ENCODE measurements at regions of chr14 and their contacts with region 1.

Region 1: GRCh38 chr14:20454516-20455354 is at the starts of genes APEX1 and OSGEP:
- DNase-seq: peak; percentile 93 to 95
- H3K4me3 ChIP-seq: peak within 1 kb of the TSS; percentile 86 to 95 (median 90)
- H3K27ac ChIP-seq: peak within 1 kb of the TSS; percentile 99
- H3K4me1 ChIP-seq: peaks cover 0 to 10% (median 1%) of the 10 kb centered on the region in 4 experiments; a peak in 4 of 7 replicates
- H3K27me3 ChIP-seq: no peaks in the 10 kb centered on the region
- CTCF ChIP-seq: no peak; a peak in 1 of 4 replicates
- EP300 ChIP-seq: no peak
- POLR2A ChIP-seq: peak; percentile 95 to 96
- RAD21 ChIP-seq: peak; percentile 5 to 13; a peak in 2 of 4 replicates
- total RNA-seq, gene APEX1: 384 and 404 TPM in 2 replicates
- total RNA-seq, gene OSGEP: 34.4 and 42.3 TPM in 2 replicates

Region 2: GRCh38 chr14:20343092-20343861 is 111.5 kb before region 1 on chr14 and contains the start of gene PARP2:
- CTCF ChIA-PET with region 1: no interaction called
- POLR2A ChIA-PET with region 1: interaction called, 69 read pairs
- DNase-seq: peak; percentile 98 to 100
- H3K4me3 ChIP-seq: peak within 1 kb of the TSS; percentile 86 to 97 (median 88)
- H3K27ac ChIP-seq: peak within 1 kb of the TSS; percentile 83
- H3K4me1 ChIP-seq: no peaks in the 10 kb centered on the region; a peak in 1 of 7 replicates
- H3K27me3 ChIP-seq: no peaks in the 10 kb centered on the region
- CTCF ChIP-seq: no peak
- EP300 ChIP-seq: no peak; a peak in 1 of 3 replicates
- POLR2A ChIP-seq: peak; percentile 97 to 100
- RAD21 ChIP-seq: 0 out of 4 replicates have a peak, but pooled peaks of 1 of the 2 experiments have one; percentile 0
- total RNA-seq, gene PARP2: 41.7 and 42.9 TPM in 2 replicates

Region 3: DNA sequence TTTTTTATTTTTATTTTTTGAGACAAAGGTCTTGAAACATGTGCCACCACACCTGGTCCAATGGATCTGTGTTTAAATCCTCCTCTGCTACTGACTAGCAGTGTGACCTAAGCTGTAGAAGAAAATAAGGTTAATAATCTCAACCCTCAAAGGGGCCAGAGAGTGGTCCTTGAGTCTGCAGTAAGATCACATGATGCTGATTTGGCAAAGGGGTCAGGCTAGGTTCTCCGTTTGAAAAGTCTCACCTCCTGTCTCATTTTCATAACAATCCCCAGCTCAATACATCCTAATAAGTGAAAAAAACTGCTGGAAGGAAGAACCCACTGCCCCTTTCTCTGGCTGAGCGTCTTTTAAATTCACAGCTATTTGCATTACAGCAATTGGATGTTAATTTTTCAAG is 33.5 kb before region 1 on chr14:
- CTCF ChIA-PET with region 1: interaction called, 6 read pairs
- POLR2A ChIA-PET with region 1: interaction called, 12 read pairs
- DNase-seq: no peak
- H3K4me3 ChIP-seq: peak overlapping the region in 1 of 4 experiments; percentile 10; a peak in 1 of 8 replicates
- H3K27ac ChIP-seq: no peak overlapping the region
- H3K4me1 ChIP-seq: peaks cover 0 to 5% (median 2%) of the 10 kb centered on the region in 4 experiments; a peak in 3 of 7 replicates
- H3K27me3 ChIP-seq: no peaks in the 10 kb centered on the region
- CTCF ChIP-seq: no peak
- EP300 ChIP-seq: no peak
- POLR2A ChIP-seq: no peak
- RAD21 ChIP-seq: no peak

Region 4: DNA sequence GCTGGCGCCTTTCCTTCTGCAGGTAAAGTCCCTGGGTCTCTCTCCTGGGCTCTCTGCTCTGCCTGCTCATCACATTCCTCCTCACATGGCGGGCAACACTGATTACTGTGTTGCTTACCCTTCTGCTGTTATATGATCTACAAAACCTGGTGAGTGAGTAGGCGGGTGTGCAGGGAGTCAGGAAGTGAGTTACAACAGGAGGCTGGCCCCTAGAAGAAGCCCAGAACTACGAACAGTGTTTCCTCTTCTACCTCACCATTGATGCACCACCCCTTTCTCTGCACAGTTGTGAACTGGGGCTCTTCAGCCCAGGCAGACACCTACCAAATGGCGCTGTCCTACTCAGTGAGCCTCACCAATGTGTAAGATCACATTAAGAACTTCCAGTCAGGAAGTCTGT is 13.9 kb before region 1 on chr14:
- CTCF ChIA-PET with region 1: no interaction called
- POLR2A ChIA-PET with region 1: interaction called, 68 read pairs
- DNase-seq: no peak
- H3K4me3 ChIP-seq: no peak overlapping the region
- H3K27ac ChIP-seq: no peak overlapping the region
- H3K4me1 ChIP-seq: peaks cover 0 to 3% (median 2%) of the 10 kb centered on the region in 4 experiments; a peak in 3 of 7 replicates
- H3K27me3 ChIP-seq: peaks cover 0 to 5% (median 2%) of the 10 kb centered on the region in 4 experiments; a peak in 4 of 7 replicates
- CTCF ChIP-seq: no peak
- EP300 ChIP-seq: no peak
- POLR2A ChIP-seq: no peak
- RAD21 ChIP-seq: no peak

Region 5: GRCh38 chr14:20489093-20489994 is 34.6 kb after region 1 on chr14:
- CTCF ChIA-PET with region 1: interaction called, 4 read pairs
- POLR2A ChIA-PET with region 1: interaction called, 11 read pairs
- DNase-seq: no peak
- H3K4me3 ChIP-seq: no peak overlapping the region
- H3K27ac ChIP-seq: no peak overlapping the region
- H3K4me1 ChIP-seq: peaks cover 0 to 8% (median 3%) of the 10 kb centered on the region in 4 experiments; a peak in 2 of 7 replicates
- H3K27me3 ChIP-seq: no peaks in the 10 kb centered on the region
- CTCF ChIP-seq: no peak
- EP300 ChIP-seq: no peak
- POLR2A ChIP-seq: no peak
- RAD21 ChIP-seq: no peak